ENCODE measurements at regions of chr14 and their contacts with region 1.

Region 1: DNA sequence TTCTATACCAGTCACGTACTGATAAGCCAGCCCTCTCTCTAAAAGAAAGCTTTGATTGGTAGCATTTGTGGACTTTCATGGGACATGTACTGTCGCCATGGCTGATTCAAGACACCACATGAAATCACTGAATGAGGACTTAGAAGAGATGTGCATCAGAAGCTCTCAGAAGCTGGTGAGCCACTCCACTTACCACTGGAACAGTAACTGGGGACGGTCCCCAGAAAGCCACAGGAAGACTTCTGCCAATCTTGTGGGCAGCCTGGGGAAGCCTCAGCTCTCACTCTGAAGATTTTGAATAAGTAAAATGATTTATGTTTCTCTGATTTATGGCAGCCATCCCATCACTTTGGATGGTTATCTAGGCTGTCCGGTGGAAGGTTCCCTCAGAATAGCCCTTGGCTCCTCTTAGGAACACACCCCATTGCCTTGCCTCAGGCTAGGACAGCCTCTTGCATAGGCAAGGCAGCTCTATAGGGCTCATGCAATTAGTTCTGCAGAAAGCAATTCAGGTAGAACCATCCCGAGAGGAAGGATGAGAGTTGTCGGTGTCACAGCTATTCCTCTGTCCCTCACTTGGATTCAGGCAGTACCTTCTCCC is 9.8 kb downstream of the DHRS1 start:
- DNase-seq: peak; percentile 44
- H3K4me3 Mint-ChIP-seq: no peak overlapping the region
- H3K27ac Mint-ChIP-seq: no peak overlapping the region
- H3K4me1 Mint-ChIP-seq: peaks cover 25% of the 10 kb centered on the region
- H3K27me3 Mint-ChIP-seq: peaks cover 14% of the 10 kb centered on the region

Region 2: DNA sequence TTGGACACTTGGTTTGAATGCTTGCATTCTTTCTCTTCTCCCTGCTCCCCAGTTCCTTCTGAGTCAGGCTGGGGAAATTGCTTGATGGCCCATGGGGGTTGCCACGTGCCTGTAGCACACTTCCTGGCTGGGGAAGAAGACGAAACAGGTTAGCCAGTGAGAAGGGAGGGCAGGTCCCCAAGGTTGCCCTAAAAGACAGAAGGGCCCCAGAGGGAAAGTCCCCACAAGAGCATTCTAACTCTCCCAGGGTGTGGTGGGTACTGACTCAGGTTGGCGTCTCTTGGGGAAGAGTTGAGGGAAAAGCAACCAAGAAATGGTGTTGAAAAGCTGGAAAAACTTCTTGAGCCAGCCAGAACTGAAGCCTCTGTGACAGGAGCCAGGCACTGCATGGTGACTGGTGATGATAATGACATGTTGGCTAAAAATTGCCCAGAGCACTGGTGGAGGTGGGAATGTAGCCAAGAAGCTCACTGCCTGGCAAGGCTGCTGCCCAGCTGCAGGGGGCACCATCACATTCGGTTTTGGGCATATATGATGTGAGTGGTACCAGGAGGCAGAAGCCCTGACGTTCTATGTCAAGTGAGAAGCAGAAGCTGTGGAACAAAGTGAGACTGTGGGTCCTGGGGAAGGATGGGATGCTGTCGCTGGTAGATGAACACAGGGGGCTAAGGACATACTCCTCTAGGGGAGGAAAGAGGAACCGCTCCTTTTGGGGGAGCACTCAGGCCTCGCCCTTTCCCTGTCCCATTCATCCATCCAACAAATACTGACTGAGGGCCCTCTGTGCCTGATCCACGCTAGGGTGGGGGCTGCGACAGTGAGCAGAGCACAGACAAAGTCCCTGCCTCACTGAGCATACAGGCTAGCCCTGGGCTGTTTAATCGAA is 10.2 kb before region 1 on chr14:
- intact Hi-C with region 1: loop called (anchors 1 kb)
- DNase-seq: peak; percentile 30
- H3K4me3 Mint-ChIP-seq: no peak overlapping the region
- H3K27ac Mint-ChIP-seq: peak overlapping the region; percentile 72
- H3K4me1 Mint-ChIP-seq: peaks cover 35% of the 10 kb centered on the region
- H3K27me3 Mint-ChIP-seq: peaks cover 5% of the 10 kb centered on the region

Region 3: DNA sequence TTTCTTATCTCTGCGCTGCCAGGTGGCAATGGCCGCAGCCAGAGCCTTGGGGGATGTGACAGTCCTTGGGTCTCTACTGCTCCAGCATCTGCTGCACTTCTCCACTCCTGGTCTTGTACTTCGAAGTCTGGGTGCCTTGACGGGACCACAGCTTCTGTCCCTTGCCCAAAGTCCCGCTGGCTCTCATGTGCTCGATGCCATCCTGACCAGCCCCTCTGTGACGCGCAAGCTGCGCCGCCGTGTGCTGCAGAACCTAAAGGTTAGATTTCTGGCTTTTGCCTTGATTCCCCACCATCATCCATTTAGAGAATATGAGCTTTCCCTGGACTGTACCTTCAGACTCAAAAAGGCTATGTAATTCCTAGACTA is 14.3 kb after region 1 on chr14:
- intact Hi-C with region 1: no loop called
- DNase-seq: no peak
- H3K4me3 Mint-ChIP-seq: no peak overlapping the region
- H3K27ac Mint-ChIP-seq: no peak overlapping the region
- H3K4me1 Mint-ChIP-seq: peaks cover 38% of the 10 kb centered on the region
- H3K27me3 Mint-ChIP-seq: no peaks in the 10 kb centered on the region

Measured in activated T-helper 1 cell treated with anti-CD3 and anti-CD28 coated beads, Interleukin-12 subunit alpha, Interleukin-12 subunit beta, Interleukin-2, Interleukin-4 antibody, amounts not matched to agents 30 ng/mL and 10 ng/mL and 1 ng/mL, durations not matched to agents 14 hours and 24 hours and 36 hours (primary cell).